Activated CD8-positive, alpha-beta T cell treated with anti-CD3 and anti-CD28 coated beads, Interleukin-2, amount 10 ng/mL, durations not matched to agents 7 days and 5 days (primary cell): ENCODE measurements at regions of chr10 and their contacts with region 1.

Region 1: DNA sequence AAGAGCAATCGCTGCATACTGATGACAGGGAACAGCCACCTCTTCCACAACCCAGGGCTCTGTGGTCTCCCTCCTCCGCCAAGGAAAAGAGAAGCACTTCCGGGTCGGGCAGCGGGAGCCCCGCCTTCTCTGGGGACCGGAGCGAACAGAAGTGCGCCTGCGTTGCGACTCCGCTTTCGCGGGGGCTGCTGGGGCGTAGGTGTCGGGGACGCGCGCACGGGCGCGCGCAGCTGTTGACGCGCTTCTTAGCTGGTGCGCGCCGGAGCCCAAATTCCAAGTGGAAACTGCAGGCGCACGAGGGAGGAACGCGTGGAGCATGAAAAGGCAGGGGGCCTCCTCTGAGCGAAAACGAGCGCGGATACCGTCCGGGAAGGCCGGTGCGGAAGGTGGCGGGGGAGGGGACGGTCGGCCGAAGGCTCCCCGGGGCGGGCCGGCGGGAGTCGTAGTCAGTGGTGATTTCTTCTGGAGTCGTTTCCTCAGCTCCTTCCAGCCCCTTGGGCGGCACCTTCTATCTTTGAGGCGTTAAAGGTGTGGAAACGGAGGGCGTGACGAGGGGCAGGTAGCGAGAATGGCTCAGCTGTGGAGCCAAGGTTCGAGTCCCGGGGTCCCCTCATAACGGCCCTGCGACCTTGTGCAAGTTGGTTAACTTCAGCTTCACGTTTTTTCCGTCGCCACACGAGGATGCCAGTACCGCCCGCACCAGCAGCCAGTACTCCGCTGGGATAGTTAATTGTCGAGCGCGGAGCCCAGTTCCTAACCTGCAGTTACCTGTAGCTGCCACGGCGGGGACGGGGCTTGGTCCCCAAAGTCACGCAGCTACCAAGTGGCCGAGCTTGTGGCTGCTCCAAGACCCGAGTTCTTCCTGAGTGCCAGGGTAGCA is at the starts of genes COX15 and CUTC:
- DNase-seq: peak; percentile 97
- ATAC-seq: peak; percentile 95
- H3K4me3 Mint-ChIP-seq: peak within 1 kb of the TSS; percentile 100
- H3K27ac Mint-ChIP-seq: peak within 1 kb of the TSS; percentile 99
- H3K4me1 Mint-ChIP-seq: peaks cover 26% of the 10 kb centered on the region
- H3K27me3 Mint-ChIP-seq: no peaks in the 10 kb centered on the region
- total RNA-seq, gene COX15: 36.1 to 39.3 TPM
- total RNA-seq, gene CUTC: 24.0 to 25.8 TPM

Region 2: GRCh38 chr10:99620713-99621453 is 111.4 kb before region 1 on chr10:
- CTCF ChIA-PET with region 1: interaction called, 5 read pairs
- POLR2A ChIA-PET with region 1: interaction called, 16 read pairs
- DNase-seq: peak; percentile 96
- ATAC-seq: peak; percentile 94
- H3K4me3 Mint-ChIP-seq: peak overlapping the region; percentile 84
- H3K27ac Mint-ChIP-seq: peak overlapping the region; percentile 96
- H3K4me1 Mint-ChIP-seq: peaks cover 39% of the 10 kb centered on the region
- H3K27me3 Mint-ChIP-seq: peaks cover 4% of the 10 kb centered on the region

Region 3: DNA sequence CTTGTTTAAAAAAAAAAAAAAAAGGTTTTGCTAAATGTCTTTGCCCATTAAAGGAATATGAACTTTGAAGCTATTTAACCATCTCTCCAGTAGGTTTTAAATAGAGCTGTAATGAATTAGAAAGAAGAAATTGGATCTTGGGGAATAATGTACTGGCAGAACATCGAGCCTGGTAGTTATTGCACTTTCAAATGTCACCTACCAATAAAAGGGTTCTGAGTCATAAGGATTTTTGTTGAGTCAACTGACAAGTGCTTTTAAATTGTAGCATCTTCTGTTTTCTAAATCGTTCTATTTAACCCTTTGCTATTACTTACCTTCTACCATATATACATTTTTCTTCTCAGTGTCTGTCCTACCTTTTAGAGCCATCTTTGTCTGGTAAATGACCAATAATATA is 10.4 kb after region 1 on chr10:
- CTCF ChIA-PET with region 1: interaction called, 15 read pairs
- POLR2A ChIA-PET with region 1: interaction called, 9 read pairs
- DNase-seq: no peak
- ATAC-seq: no peak
- H3K4me3 Mint-ChIP-seq: no peak overlapping the region
- H3K27ac Mint-ChIP-seq: no peak overlapping the region
- H3K4me1 Mint-ChIP-seq: peaks cover 2% of the 10 kb centered on the region
- H3K27me3 Mint-ChIP-seq: no peaks in the 10 kb centered on the region